ENCODE measurements at regions of chr17 and their contacts with region 1.

Region 1: DNA sequence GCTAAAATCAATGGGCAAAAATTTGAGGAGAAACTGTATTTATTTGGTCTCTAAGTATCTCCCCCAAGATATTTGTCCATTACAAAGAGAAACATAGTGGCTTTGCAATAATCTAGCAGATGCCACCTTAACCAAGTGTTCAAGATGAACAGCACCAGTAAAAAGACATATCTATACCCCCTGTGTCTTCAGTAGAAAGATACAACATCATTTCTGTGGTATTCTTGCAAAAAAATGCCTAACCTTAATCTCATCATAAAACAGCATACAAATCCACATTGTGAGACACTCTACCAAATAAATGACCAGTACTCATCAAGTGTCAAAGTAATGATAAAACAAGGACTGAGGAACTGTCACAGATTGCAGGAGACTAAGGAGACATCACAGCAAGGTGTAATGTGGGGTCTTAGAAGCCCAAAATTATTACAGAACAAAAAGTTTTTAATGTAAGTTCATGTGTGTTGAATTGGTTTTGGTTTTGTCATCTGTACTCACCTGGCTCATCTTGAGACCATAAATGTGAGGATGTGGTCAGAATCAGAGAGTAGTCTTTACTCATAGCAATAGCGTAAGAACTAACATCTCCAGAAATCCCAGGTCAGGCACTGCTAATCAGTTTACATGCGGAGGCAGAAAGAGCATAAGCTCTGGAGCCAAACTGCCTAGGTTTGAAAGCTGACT is 77.2 kb downstream of the AATF start:
- DNase-seq: no peak
- ATAC-seq: no peak
- H3K4me3 ChIP-seq: no peak overlapping the region
- H3K27ac ChIP-seq: no peak overlapping the region
- H3K4me1 ChIP-seq: peaks cover 0 to 8% (median 0%) of the 10 kb centered on the region in 12 donors
- H3K27me3 ChIP-seq: no peaks in the 10 kb centered on the region
- CTCF ChIP-seq: no peak
- POLR2A ChIP-seq: no peak

Region 2: DNA sequence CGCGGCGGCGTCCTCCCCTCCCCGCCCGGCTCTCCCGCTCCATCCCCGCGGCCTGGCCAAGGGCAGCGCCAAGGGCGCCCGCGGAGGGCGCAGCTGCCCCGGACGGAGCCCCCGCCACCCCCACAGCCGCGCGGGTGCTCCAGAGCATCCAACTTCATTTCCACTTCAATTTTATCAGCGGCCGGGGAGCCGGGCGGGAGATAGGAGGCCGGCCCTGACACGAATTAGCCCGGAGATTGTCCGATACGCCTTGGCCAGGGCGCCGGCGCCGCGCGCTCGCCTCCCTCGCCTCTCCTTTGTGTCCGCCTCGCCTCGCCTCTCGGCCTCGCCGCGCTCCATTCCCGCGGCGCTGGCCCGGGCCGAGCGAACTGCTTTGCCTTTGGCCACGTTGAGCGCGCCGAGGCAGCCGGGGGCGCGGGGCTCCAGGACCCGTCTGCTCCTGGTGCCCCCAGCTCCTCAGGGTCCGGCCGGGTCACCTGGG is 217.8 kb before region 1 on chr17:
- intact Hi-C with region 1: no loop called
- DNase-seq: no peak
- ATAC-seq: no peak
- H3K4me3 ChIP-seq: peak overlapping the region in 1 of 12 donors; percentile 9
- H3K27ac ChIP-seq: no peak overlapping the region
- H3K4me1 ChIP-seq: peaks cover 0 to 8% (median 0%) of the 10 kb centered on the region in 12 donors
- H3K27me3 ChIP-seq: peaks cover 20 to 92% (median 47%) of the 10 kb centered on the region in 9 donors
- CTCF ChIP-seq: no peak
- POLR2A ChIP-seq: no peak

Region 3: DNA sequence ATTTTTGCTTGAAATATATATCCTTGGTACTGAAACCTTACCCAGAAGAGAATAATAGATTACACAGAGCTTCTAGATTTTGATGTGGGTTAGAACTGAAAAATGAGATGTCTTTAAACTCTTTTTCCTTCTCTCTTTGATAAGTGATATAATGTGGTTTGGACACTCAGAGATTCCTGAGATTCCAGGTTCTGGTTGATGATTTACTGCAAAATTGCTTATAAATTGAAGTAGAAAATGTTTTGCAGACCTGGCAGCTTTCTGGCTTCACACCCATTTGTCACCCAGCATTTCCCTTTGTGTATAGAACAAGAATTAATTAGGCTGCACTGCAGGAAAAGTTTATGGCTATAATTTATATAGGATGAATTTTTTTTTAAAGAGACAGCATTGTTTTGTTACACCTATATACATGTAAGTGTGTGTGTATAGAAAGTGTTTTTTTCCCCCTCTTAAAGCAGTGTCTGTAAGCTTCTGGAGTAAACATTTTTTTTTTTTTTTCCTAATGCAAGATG is 53.7 kb before region 1 on chr17:
- intact Hi-C with region 1: loop called in 1 of 10 experiments (anchors 10 kb)
- DNase-seq: no peak
- ATAC-seq: no peak
- H3K4me3 ChIP-seq: no peak overlapping the region
- H3K27ac ChIP-seq: no peak overlapping the region
- H3K4me1 ChIP-seq: peaks cover 0 to 7% (median 0%) of the 10 kb centered on the region in 12 donors
- H3K27me3 ChIP-seq: no peaks in the 10 kb centered on the region
- CTCF ChIP-seq: no peak
- POLR2A ChIP-seq: no peak

Region 4: GRCh38 chr17:37081287-37081686 is 55.3 kb after region 1 on chr17:
- intact Hi-C with region 1: no loop called
- DNase-seq: no peak
- ATAC-seq: no peak
- H3K4me3 ChIP-seq: no peak overlapping the region
- H3K27ac ChIP-seq: no peak overlapping the region
- H3K4me1 ChIP-seq: no peaks in the 10 kb centered on the region
- H3K27me3 ChIP-seq: no peaks in the 10 kb centered on the region
- CTCF ChIP-seq: no peak
- POLR2A ChIP-seq: no peak

Measured in heart left ventricle (tissue), 16 donors.